Prostate gland (tissue), 2 donors: ENCODE measurements at regions of chr6 and their contacts with region 1.

Region 1: GRCh38 chr6:37566111-37566949 is 66.6 kb upstream of the CCDC167 start:
- DNase-seq: peak; percentile 46
- H3K4me3 ChIP-seq: peak overlapping the region; percentile 12 to 23
- H3K27ac ChIP-seq: no peak overlapping the region
- H3K4me1 ChIP-seq: peaks cover 4% of the 10 kb centered on the region
- H3K27me3 ChIP-seq: peaks cover 4% of the 10 kb centered on the region
- CTCF ChIP-seq: peak; percentile 57 to 89 (median 78)
- POLR2A ChIP-seq: no peak

Region 2: GRCh38 chr6:37038292-37039198 is 527.8 kb before region 1 on chr6:
- intact Hi-C with region 1: no loop called
- DNase-seq: no peak
- H3K4me3 ChIP-seq: no peak overlapping the region
- H3K27ac ChIP-seq: peak overlapping the region in 1 of 2 donors; percentile 12
- H3K4me1 ChIP-seq: no peaks in the 10 kb centered on the region
- H3K27me3 ChIP-seq: no peaks in the 10 kb centered on the region
- CTCF ChIP-seq: no peak
- POLR2A ChIP-seq: no peak

Region 3: GRCh38 chr6:37324131-37325033 is 241.9 kb before region 1 on chr6:
- intact Hi-C with region 1: loop called (anchors 5 kb)
- DNase-seq: no peak
- H3K4me3 ChIP-seq: no peak overlapping the region
- H3K27ac ChIP-seq: no peak overlapping the region
- H3K4me1 ChIP-seq: peaks cover 5% of the 10 kb centered on the region
- H3K27me3 ChIP-seq: no peaks in the 10 kb centered on the region
- CTCF ChIP-seq: no peak
- POLR2A ChIP-seq: no peak

Region 4: DNA sequence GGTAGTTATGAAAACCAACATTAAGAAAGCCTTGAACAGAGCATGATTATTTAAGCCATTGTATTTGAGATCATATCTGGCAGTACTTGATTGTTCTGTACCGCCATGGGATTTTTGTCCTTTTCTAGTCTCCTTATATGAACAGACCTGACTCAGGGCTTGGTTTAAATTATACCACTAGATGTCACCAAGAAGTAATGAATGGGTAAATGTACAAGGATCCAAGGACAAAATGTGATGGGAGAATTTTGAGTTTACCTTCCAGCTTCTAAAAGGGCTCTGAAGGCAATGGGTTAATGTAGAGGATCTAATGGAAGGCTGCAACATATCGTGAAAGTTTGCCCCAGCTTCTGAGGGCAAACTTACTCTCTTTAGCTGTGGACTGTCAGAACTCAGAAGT is 200.6 kb before region 1 on chr6:
- intact Hi-C with region 1: loop called (anchors 10 kb)
- DNase-seq: no peak
- H3K4me3 ChIP-seq: no peak overlapping the region
- H3K27ac ChIP-seq: no peak overlapping the region
- H3K4me1 ChIP-seq: no peaks in the 10 kb centered on the region
- H3K27me3 ChIP-seq: no peaks in the 10 kb centered on the region
- CTCF ChIP-seq: peak in 1 of 4 experiments; percentile 25
- POLR2A ChIP-seq: no peak